ENCODE measurements at regions of chr7 and their contacts with region 1.

Region 1: GRCh38 chr7:154598396-154598795 is 404.5 kb downstream of the PAXIP1 start:
- DNase-seq: no peak
- H3K4me3 ChIP-seq: no peak overlapping the region
- H3K27ac ChIP-seq: no peak overlapping the region
- H3K4me1 ChIP-seq: no peaks in the 10 kb centered on the region
- H3K27me3 ChIP-seq: no peaks in the 10 kb centered on the region
- CTCF ChIP-seq: no peak

Region 2: DNA sequence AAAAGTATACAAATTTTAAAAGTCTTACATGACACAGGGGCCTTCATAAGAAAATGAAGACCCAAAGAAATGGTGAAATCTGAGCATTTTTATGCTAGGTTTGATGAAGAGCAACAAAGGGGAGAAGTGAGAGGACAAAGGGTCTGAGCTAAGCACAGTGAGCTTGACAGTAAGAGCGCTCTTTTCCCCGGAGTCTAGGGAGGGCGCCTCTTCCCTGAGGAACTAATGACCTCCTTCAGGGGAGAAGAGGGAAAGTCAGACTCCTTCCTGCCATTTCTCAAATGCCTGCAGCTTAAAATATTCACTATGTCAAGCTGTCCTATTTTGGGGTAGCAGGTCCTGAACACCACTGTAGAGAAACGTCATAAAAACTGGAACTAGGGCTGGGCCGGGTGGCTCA is 422.6 kb after region 1 on chr7:
- CTCF ChIA-PET with region 1: no interaction called
- POLR2A ChIA-PET with region 1: interaction called, 10 read pairs
- intact Hi-C with region 1: no loop called
- DNase-seq: no peak
- H3K4me3 ChIP-seq: no peak overlapping the region
- H3K27ac ChIP-seq: no peak overlapping the region
- H3K4me1 ChIP-seq: no peaks in the 10 kb centered on the region
- H3K27me3 ChIP-seq: no peaks in the 10 kb centered on the region
- CTCF ChIP-seq: no peak